Lower leg skin (tissue), 4 donors: ENCODE measurements at regions of chr13 and their contacts with region 1.

Region 1: DNA sequence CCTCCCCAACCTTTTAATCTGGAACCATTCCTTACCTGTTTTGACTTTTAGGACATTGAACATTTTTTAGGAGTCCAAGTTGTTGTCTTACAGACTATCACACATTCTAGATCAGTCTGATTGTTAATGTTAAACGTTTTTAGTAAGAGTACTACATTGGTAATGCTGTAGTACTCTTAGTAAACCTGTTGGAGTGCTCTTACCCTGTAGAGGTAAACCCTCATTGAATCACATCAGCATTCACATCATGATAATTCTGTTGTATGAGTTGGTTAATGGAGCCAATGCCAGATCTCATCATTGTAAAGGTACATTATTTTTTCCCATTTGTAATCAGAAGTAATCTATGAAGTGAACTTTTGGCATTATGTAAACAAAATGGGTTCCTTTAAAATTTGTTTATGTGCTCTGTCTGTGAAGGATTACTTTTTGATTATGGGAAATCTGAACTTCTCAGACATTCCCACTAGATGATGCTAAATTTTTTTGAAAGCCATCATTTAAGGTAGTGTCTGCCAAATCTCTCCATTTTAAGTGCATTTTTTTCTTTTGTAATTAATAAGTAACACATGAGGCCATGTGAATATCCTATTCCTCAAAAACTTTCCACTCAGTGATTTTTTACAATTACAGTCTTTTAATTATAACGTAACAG is 55.2 kb downstream of the VWA8 start:
- DNase-seq: no peak
- H3K4me3 ChIP-seq: no peak overlapping the region
- CTCF ChIP-seq: no peak
- POLR2A ChIP-seq: no peak

Region 2: DNA sequence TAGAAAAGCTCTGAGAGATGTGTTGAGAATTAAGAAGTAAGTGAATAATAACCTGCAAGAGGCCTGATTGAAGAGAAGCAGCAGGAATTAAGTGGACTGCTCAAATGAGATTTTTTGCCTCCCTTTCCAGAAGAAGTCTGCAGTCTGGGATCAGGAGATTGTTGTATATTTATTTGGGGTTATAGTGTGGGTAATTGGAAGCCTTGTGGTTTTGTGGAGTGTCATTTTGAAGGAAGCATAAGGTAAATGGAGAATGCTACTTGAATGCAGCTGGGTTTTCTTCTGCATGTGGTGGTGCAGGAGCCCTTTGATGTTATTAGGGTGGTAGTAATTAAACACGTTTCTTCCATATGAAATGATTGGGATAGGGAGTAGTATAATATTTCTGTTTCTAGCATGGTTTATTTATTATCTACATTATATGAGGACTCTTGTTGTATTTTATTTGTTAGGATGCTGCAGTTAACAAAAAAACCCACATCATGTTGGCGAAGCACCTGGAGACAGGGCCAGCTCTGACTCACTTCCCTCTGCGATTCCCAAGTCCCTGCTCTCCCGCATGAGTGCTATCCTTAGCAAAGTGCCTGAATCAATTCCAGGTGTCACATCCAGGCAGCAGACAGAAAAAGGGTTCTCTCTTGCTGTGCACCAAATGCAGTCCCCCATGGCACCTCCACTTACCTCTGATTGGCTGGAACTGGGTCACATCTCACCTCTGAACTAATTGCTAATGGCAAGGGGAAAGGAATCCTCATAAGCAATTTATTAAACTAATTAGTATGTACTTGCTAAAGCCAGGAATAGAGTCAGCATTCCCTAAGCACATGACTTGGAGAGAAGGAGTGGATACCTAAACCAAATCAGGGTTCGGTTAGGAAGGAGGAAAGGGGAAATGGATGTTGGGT is 197.5 kb after region 1 on chr13:
- intact Hi-C with region 1: loop called (anchors 10 kb)
- DNase-seq: no peak
- H3K4me3 ChIP-seq: no peak overlapping the region
- CTCF ChIP-seq: no peak
- POLR2A ChIP-seq: no peak

Region 3: GRCh38 chr13:42247883-42248282 is 342.2 kb after region 1 on chr13:
- intact Hi-C with region 1: no loop called
- DNase-seq: no peak
- H3K4me3 ChIP-seq: no peak overlapping the region
- CTCF ChIP-seq: no peak
- POLR2A ChIP-seq: no peak

Region 4: DNA sequence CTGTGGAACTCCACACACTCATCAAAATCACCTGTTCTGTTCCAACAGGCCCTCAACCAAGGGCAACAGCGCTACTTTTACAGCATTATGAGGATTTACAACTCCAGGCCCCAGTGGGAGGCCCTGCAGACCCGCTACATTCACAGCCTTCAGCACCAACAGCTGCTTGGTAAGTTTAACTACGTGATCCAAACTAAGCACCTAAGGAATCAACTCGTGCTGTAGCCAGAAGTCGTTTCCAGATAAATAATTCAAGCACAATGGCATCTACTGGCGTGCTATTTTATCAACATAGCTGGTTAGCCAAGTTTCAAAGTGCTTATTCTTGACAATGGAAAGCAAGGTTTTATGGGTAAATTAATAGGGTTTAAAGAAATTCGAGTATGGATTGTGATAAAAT is 881.0 kb after region 1 on chr13:
- intact Hi-C with region 1: no loop called
- DNase-seq: no peak
- H3K4me3 ChIP-seq: no peak overlapping the region
- CTCF ChIP-seq: no peak
- POLR2A ChIP-seq: no peak